Adrenal gland (tissue), 19 donors: ENCODE measurements at regions of chr9 and their contacts with region 1.

Region 1: DNA sequence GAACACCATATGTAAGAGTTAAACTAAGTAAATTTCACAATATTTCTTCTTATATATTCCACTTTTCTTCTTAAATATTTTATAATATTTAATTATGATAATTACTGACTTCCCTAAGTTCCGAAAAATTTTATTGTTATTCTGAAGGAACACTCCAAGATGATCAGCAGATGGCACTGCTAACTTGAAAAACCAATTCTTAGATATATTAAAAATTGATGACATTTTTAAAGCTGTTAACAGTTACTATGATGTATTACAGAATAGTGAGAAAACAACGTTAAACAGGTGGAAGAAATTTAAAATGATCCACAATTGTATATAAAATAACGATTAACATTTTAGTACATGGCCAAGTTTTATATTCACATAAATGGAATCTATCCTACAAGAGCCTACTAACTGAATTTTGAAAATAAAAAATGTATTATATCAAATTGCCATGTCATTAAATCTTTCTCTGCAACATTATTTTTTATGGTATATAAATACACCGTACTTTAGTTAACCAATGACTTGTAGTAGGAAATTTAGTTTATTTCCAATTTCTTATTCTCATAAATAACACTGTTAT is 30.1 kb upstream of the MUSK start:
- DNase-seq: no peak
- H3K4me3 ChIP-seq: no peak overlapping the region
- H3K27ac ChIP-seq: no peak overlapping the region
- H3K4me1 ChIP-seq: no peaks in the 10 kb centered on the region
- H3K27me3 ChIP-seq: no peaks in the 10 kb centered on the region
- CTCF ChIP-seq: peak in 5 of 6 experiments; percentile 24 to 53 (median 35)
- POLR2A ChIP-seq: no peak

Region 2: GRCh38 chr9:110464321-110464720 is 174.1 kb before region 1 on chr9:
- intact Hi-C with region 1: no loop called
- DNase-seq: no peak
- H3K4me3 ChIP-seq: no peak overlapping the region
- H3K27ac ChIP-seq: no peak overlapping the region
- H3K4me1 ChIP-seq: no peaks in the 10 kb centered on the region
- H3K27me3 ChIP-seq: no peaks in the 10 kb centered on the region
- CTCF ChIP-seq: no peak
- POLR2A ChIP-seq: no peak

Region 3: DNA sequence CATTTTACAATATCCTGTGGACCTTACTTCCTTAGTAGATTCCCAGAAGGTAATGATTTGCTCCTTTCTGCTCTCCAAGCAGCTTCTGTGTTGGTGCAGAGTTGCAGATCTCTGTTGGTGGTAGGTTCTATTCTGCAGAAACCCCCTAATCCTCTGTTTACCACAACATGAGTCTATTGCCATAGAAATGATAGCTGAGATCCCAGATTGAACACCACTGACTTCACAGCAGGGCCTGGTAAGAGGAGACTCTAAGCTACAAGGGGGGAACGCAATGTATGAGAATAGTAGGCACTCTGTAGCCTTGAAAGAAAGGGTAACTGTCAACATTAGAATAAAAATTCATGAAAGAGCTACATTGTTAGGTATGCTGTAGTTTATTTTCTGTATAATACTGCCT is 89.6 kb after region 1 on chr9:
- intact Hi-C with region 1: no loop called
- DNase-seq: no peak
- H3K4me3 ChIP-seq: no peak overlapping the region
- H3K27ac ChIP-seq: no peak overlapping the region
- H3K4me1 ChIP-seq: no peaks in the 10 kb centered on the region
- H3K27me3 ChIP-seq: no peaks in the 10 kb centered on the region
- CTCF ChIP-seq: no peak
- POLR2A ChIP-seq: no peak

Region 4: DNA sequence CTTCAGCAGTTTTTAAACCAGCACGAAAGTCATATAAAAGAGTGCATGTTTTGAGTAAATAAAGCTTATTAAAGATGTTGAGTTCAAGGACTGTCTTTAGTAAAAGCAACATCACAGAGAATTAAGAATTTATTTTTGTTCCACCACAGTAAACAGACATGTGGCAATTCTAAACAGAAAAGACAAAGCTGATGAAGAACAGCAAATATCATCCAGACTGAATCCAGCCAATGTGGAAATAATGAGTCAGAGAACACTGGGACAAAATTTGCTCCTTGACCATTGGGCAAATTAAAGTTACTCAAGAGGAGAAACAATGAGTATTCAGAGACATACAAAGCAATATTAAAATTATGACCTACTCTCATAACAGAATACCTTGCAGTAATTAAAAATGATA is 662.7 kb after region 1 on chr9:
- intact Hi-C with region 1: loop called (anchors 10 kb)
- DNase-seq: no peak
- H3K4me3 ChIP-seq: no peak overlapping the region
- H3K27ac ChIP-seq: no peak overlapping the region
- H3K4me1 ChIP-seq: peaks cover 0 to 6% of the 10 kb centered on the region in 2 donors
- H3K27me3 ChIP-seq: no peaks in the 10 kb centered on the region
- CTCF ChIP-seq: no peak
- POLR2A ChIP-seq: no peak